B cell (primary cell): ENCODE measurements at regions of chr1 and their contacts with region 1.

Region 1: DNA sequence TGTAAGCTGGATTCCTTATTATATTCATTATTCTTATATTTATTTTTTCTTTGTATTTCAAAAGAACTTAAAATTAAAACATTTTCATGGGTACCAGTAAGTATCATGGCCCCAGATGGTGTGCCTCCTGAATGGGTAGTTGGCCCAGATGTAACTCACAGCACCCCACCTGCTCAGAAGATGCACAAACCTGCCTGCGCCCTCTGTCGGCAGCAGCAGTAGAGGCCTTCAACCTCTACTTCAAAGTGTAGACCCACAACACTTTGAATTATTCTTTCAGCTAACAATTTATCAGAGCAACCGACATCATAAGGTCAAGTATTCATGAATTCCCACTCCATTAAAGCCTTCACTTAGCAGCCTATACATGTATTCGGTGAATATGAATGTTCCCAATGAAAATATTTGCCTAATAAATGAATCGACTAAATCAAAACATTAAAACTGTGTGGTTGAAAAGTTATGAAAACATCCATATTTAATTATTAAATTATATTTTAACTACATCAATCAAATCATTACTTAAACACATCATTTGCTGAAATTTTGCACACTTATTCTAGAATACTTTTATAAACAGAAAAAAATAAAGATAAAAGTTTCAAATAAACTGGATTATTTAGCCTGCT is 25.4 kb downstream of the PIGM start:
- DNase-seq: peak; percentile 83
- ATAC-seq: peak; percentile 84
- H3K4me3 ChIP-seq: no peak overlapping the region
- H3K4me3 Mint-ChIP-seq: no peak overlapping the region
- H3K27ac ChIP-seq: no peak overlapping the region
- H3K27ac Mint-ChIP-seq: no peak overlapping the region
- H3K4me1 ChIP-seq: no peaks in the 10 kb centered on the region
- H3K4me1 Mint-ChIP-seq: no peaks in the 10 kb centered on the region
- H3K27me3 ChIP-seq: peaks cover 0 to 7% (median 0%) of the 10 kb centered on the region in 4 experiments
- H3K27me3 Mint-ChIP-seq: peaks cover 15% of the 10 kb centered on the region
- CTCF ChIP-seq: peak; percentile 91

Region 2: GRCh38 chr1:159161001-159161718 is 845.3 kb before region 1 on chr1:
- CTCF ChIA-PET with region 1: interaction called, 8 read pairs
- POLR2A ChIA-PET with region 1: no interaction called
- intact Hi-C with region 1: loop called (anchors 1 kb)
- DNase-seq: peak; percentile 82
- ATAC-seq: peak; percentile 98
- H3K4me3 ChIP-seq: no peak overlapping the region
- H3K4me3 Mint-ChIP-seq: no peak overlapping the region
- H3K27ac ChIP-seq: no peak overlapping the region
- H3K27ac Mint-ChIP-seq: no peak overlapping the region
- H3K4me1 ChIP-seq: peaks cover 4 to 6% of the 10 kb centered on the region in 2 donors
- H3K4me1 Mint-ChIP-seq: peaks cover 7% of the 10 kb centered on the region
- H3K27me3 ChIP-seq: no peaks in the 10 kb centered on the region
- H3K27me3 Mint-ChIP-seq: no peaks in the 10 kb centered on the region
- CTCF ChIP-seq: peak; percentile 96

Region 3: GRCh38 chr1:159798893-159799292 is 207.5 kb before region 1 on chr1:
- CTCF ChIA-PET with region 1: interaction called, 252 read pairs
- POLR2A ChIA-PET with region 1: no interaction called
- intact Hi-C with region 1: loop called (anchors 1 kb)
- DNase-seq: peak; percentile 65
- ATAC-seq: peak; percentile 56
- H3K4me3 ChIP-seq: no peak overlapping the region
- H3K4me3 Mint-ChIP-seq: no peak overlapping the region
- H3K27ac ChIP-seq: no peak overlapping the region
- H3K27ac Mint-ChIP-seq: no peak overlapping the region
- H3K4me1 ChIP-seq: peaks cover 0 to 7% of the 10 kb centered on the region in 2 donors
- H3K4me1 Mint-ChIP-seq: peaks cover 9% of the 10 kb centered on the region
- H3K27me3 ChIP-seq: peaks cover 0 to 30% (median 15%) of the 10 kb centered on the region in 4 experiments
- H3K27me3 Mint-ChIP-seq: peaks cover 54% of the 10 kb centered on the region
- CTCF ChIP-seq: peak; percentile 75

Region 4: DNA sequence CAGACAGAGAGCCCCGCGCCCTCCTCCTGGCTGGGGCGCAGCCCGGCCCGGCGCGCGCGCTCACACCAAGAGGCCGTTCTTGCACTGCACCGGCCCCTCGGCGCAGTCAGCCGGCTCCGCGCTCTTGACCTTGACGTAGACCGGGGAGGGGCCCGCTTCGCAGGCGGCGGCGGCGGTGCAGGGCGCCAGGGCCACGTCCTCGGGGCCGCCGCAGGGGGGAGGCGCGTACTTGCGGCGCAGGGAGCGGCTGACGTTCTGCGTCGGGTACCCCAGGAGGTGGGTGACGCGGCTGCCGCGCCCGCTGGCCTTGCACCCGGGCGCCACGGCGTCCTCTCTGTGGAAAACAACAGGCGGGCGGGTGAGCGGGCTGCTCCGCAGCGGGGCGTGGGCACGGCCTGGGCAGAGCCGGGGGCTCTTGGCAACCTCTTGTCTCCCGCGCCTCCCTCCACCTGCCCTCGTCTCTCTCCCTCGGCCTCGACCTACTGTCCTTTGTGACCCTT is 151.7 kb before region 1 on chr1:
- CTCF ChIA-PET with region 1: interaction called, 6 read pairs
- POLR2A ChIA-PET with region 1: no interaction called
- intact Hi-C with region 1: loop called (anchors 1 kb)
- DNase-seq: peak; percentile 75
- ATAC-seq: peak; percentile 93
- H3K4me3 ChIP-seq: peak overlapping the region in 4 of 5 experiments; percentile 38 to 64 (median 56)
- H3K4me3 Mint-ChIP-seq: peak overlapping the region; percentile 70
- H3K27ac ChIP-seq: peak overlapping the region in 1 of 2 donors; percentile 20
- H3K27ac Mint-ChIP-seq: no peak overlapping the region
- H3K4me1 ChIP-seq: peaks cover 5 to 13% of the 10 kb centered on the region in 2 donors
- H3K4me1 Mint-ChIP-seq: peaks cover 12% of the 10 kb centered on the region
- H3K27me3 ChIP-seq: peaks cover 0 to 21% (median 2%) of the 10 kb centered on the region in 4 experiments
- H3K27me3 Mint-ChIP-seq: peaks cover 4% of the 10 kb centered on the region
- CTCF ChIP-seq: no peak

Region 5: GRCh38 chr1:159936273-159936904 is 70.0 kb before region 1 on chr1:
- CTCF ChIA-PET with region 1: interaction called, 177 read pairs
- POLR2A ChIA-PET with region 1: no interaction called
- intact Hi-C with region 1: loop called (anchors 1 kb)
- DNase-seq: peak; percentile 85
- ATAC-seq: peak; percentile 89
- H3K4me3 ChIP-seq: peak overlapping the region in 1 of 5 experiments; percentile 17
- H3K4me3 Mint-ChIP-seq: peak overlapping the region; percentile 49
- H3K27ac ChIP-seq: no peak overlapping the region
- H3K27ac Mint-ChIP-seq: peak overlapping the region; percentile 61
- H3K4me1 ChIP-seq: peaks cover 37 to 43% of the 10 kb centered on the region in 2 donors
- H3K4me1 Mint-ChIP-seq: peaks cover 47% of the 10 kb centered on the region
- H3K27me3 ChIP-seq: no peaks in the 10 kb centered on the region
- H3K27me3 Mint-ChIP-seq: peaks cover 4% of the 10 kb centered on the region
- CTCF ChIP-seq: peak; percentile 96

Region 6: GRCh38 chr1:159991513-159991912 is 14.9 kb before region 1 on chr1:
- CTCF ChIA-PET with region 1: interaction called, 10 read pairs
- POLR2A ChIA-PET with region 1: no interaction called
- intact Hi-C with region 1: no loop called
- DNase-seq: no peak
- ATAC-seq: peak; percentile 10
- H3K4me3 ChIP-seq: no peak overlapping the region
- H3K4me3 Mint-ChIP-seq: no peak overlapping the region
- H3K27ac ChIP-seq: no peak overlapping the region
- H3K27ac Mint-ChIP-seq: no peak overlapping the region
- H3K4me1 ChIP-seq: no peaks in the 10 kb centered on the region
- H3K4me1 Mint-ChIP-seq: peaks cover 5% of the 10 kb centered on the region
- H3K27me3 ChIP-seq: peaks cover 0 to 14% (median 9%) of the 10 kb centered on the region in 4 experiments
- H3K27me3 Mint-ChIP-seq: peaks cover 41% of the 10 kb centered on the region
- CTCF ChIP-seq: no peak

Region 7: DNA sequence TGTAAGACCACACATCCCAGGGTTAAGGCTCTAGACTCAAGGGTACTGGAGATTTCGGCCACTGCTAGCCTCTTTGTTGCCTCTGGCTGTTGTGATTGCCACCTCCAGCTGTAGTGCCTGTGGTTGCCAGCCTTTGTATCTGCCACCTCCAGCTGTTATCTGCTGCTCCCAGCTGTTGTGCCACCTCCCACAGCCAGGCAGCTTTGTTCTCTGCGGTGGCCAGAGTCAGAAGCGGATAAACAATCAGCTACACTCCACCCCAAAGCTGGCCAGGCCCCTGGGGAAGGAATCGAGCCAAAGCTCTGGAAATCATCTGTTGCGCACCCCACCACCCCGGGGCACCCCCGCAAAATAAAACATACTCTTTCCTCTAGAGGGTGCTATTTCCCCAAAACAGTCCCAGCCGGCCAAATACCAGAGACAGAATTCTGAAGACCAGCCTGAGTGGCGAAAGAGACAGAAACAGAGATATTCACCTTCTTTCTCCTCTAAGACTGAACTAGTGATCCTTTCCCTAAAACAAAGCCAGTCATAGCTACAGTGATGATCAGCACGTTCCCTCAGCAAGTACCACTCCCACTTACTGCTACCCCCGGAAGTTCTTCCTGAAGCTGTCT is 40.2 kb after region 1 on chr1:
- CTCF ChIA-PET with region 1: interaction called, 11 read pairs
- POLR2A ChIA-PET with region 1: no interaction called
- intact Hi-C with region 1: no loop called
- DNase-seq: peak; percentile 73
- ATAC-seq: peak; percentile 86
- H3K4me3 ChIP-seq: peak overlapping the region in 4 of 5 experiments; percentile 26 to 57 (median 53)
- H3K4me3 Mint-ChIP-seq: peak overlapping the region; percentile 91
- H3K27ac ChIP-seq: no peak overlapping the region
- H3K27ac Mint-ChIP-seq: peak overlapping the region; percentile 17
- H3K4me1 ChIP-seq: peaks cover 11 to 12% of the 10 kb centered on the region in 2 donors
- H3K4me1 Mint-ChIP-seq: peaks cover 12% of the 10 kb centered on the region
- H3K27me3 ChIP-seq: peaks cover 0 to 10% (median 7%) of the 10 kb centered on the region in 4 experiments
- H3K27me3 Mint-ChIP-seq: peaks cover 25% of the 10 kb centered on the region
- CTCF ChIP-seq: peak; percentile 82